GM10248 (cell line): ENCODE measurements at regions of chr3 and their contacts with region 1.

Region 1: DNA sequence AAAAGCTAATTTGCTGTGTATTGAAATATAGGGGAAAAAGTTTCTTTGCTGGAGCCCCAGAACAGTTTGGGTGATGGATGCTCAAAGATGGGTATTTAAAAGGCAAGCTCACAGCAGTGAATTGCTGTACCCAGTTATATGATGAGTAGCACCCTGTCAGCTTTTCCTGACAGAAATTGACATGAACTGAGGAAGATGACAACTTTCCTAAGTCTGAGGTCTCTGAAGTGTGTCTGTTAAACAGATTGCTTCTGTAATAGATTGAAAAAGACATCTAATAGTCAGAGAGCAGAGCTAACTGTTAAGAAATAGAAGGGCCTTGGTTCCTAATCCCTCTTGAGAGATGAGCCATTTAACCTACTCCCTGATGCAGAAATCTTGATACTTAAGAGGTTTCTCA is 1278.0 kb upstream of the ALCAM start:
- DNase-seq: no peak
- CTCF ChIP-seq: no peak

Region 2: GRCh38 chr3:104102386-104102785 is 13.6 kb after region 1 on chr3:
- CTCF ChIA-PET with region 1: interaction called, 25 read pairs
- POLR2A ChIA-PET with region 1: no interaction called
- DNase-seq: peak; percentile 46
- CTCF ChIP-seq: peak; percentile 60